Activated CD4-positive, alpha-beta memory T cell treated with anti-CD3 and anti-CD28 coated beads for 36 hours (primary cell): ENCODE measurements at regions of chr16 and their contacts with region 1.

Region 1: GRCh38 chr16:85448557-85449197 is 164.4 kb upstream of the GSE1 start:
- DNase-seq: peak; percentile 42
- H3K4me3 Mint-ChIP-seq: no peak overlapping the region
- H3K27ac Mint-ChIP-seq: no peak overlapping the region
- H3K4me1 Mint-ChIP-seq: peaks cover 23% of the 10 kb centered on the region
- H3K27me3 Mint-ChIP-seq: no peaks in the 10 kb centered on the region

Region 2: GRCh38 chr16:85172455-85173145 is 276.1 kb before region 1 on chr16:
- CTCF ChIA-PET with region 1: no interaction called
- POLR2A ChIA-PET with region 1: no interaction called
- intact Hi-C with region 1: no loop called
- DNase-seq: no peak
- H3K4me3 Mint-ChIP-seq: no peak overlapping the region
- H3K27ac Mint-ChIP-seq: no peak overlapping the region
- H3K4me1 Mint-ChIP-seq: no peaks in the 10 kb centered on the region
- H3K27me3 Mint-ChIP-seq: peaks cover 62% of the 10 kb centered on the region

Region 3: GRCh38 chr16:85428168-85428898 is 20.3 kb before region 1 on chr16:
- CTCF ChIA-PET with region 1: interaction called, 17 read pairs
- POLR2A ChIA-PET with region 1: no interaction called
- intact Hi-C with region 1: no loop called
- DNase-seq: peak; percentile 59
- H3K4me3 Mint-ChIP-seq: no peak overlapping the region
- H3K27ac Mint-ChIP-seq: no peak overlapping the region
- H3K4me1 Mint-ChIP-seq: no peaks in the 10 kb centered on the region
- H3K27me3 Mint-ChIP-seq: peaks cover 9% of the 10 kb centered on the region